Gastrocnemius medialis (tissue), 4 donors: ENCODE measurements at regions of chr4 and their contacts with region 1.

Region 1: DNA sequence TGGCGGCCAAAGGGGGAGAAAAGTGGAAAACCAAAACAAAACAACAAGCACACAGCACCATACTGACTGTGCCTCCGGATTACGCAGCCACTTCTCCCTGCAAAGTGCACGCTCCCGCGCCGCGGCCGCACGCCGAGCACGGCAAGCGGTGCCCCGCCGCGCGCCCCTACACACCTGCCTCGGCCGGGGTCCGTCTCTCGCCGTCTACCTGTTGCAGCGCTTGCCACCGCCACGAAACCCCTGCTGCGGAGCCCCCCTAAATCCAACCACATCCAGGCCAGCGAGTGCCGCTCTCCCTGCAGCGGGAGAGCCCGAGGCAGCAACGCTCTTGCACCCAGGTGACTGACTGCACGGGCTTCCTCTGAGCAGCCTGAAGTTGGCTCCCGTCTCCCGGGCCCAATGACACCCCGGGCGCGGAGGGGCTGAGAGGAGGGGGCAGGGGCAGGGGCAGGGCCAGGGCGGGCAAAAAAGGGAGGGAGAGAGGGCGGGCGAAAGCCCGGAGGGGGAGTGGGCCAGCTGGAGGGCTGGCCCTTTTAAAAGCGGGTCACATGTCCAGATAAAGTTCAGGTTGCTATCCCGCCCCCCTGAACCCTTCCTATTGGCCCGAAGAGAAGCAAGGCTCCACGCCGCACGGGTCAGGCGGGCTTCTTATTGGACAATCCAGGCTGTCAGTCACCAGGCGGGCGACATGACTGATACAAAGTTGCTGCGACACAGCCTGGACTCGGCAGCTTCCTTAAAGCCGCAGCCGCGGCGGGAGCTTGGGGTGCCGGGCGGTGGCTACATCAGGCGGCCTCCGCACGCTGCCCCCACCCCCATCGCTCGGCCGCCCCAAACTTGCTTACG is at the start of gene NR3C2:
- DNase-seq: peak; percentile 100
- ATAC-seq: peak; percentile 78 to 81
- H3K4me3 ChIP-seq: peak within 1 kb of the TSS; percentile 94 to 100 (median 97)
- H3K27ac ChIP-seq: peak within 1 kb of the TSS; percentile 97 to 98 (median 98)
- H3K4me1 ChIP-seq: peaks cover 2 to 37% of the 10 kb centered on the region in 2 donors
- H3K27me3 ChIP-seq: no peaks in the 10 kb centered on the region
- CTCF ChIP-seq: no peak
- POLR2A ChIP-seq: peak; percentile 100
- total RNA-seq, gene NR3C2: 5.6 to 10.4 (median 8.1) TPM

Region 2: DNA sequence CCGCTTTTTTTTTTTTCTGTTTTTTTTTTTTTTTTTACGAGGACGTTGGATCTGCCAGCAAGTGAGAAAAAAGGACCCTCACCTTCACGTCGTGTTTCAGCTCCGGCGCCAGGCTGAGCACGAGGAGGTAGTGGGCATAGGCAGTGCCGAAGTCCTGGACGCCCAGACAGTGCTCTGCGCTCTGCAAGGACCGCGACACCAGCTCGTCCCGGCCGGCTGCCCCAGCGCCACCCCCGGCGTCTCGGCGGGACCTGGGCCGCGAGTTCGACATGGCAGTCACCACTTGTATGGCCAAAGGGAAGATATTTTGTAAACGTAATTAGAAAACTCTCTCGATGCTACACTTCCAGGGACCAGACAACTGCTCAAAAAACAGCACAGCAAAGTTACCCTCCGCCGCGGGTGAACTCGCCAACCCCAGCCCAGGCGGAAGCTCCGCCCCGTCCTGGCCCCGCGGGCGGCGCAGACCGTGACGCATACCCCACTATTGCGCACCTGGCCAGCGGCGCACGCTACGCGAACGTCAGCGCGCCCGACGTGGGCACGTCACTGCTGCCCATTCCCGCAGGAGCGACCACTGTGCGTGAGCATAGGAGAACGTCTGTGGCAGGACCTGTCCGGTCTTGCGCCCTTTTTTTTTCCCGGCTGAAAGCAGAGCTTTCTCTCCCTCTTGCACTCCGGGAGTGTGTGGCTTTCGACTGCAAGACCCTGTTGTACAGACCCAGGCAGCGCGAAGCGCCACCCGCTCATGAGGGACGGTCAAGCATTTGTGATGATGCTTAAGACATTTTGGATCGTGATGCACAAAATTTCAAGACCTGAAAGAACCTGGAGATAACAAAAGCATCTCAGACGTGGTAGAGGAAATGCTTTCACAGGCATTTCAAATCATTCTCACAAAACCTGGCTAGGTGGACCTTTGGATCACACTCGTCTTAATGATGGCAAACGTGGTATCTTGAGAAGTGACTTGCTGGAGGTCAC is 758.2 kb before region 1 on chr4 and contains the start of gene PRMT9:
- in situ Hi-C with region 1: no loop called
- intact Hi-C with region 1: loop called (anchors 5 kb)
- DNase-seq: peak; percentile 75 to 88
- ATAC-seq: peak; percentile 94 to 95
- H3K4me3 ChIP-seq: peak within 1 kb of the TSS; percentile 67 to 93 (median 90)
- H3K27ac ChIP-seq: peak within 1 kb of the TSS; percentile 90 to 97 (median 93)
- H3K4me1 ChIP-seq: peaks cover 19 to 20% of the 10 kb centered on the region in 2 donors
- H3K27me3 ChIP-seq: no peaks in the 10 kb centered on the region
- CTCF ChIP-seq: no peak
- POLR2A ChIP-seq: peak; percentile 84 to 85
- total RNA-seq, gene PRMT9: 5.2 to 9.1 (median 5.5) TPM

Region 3: DNA sequence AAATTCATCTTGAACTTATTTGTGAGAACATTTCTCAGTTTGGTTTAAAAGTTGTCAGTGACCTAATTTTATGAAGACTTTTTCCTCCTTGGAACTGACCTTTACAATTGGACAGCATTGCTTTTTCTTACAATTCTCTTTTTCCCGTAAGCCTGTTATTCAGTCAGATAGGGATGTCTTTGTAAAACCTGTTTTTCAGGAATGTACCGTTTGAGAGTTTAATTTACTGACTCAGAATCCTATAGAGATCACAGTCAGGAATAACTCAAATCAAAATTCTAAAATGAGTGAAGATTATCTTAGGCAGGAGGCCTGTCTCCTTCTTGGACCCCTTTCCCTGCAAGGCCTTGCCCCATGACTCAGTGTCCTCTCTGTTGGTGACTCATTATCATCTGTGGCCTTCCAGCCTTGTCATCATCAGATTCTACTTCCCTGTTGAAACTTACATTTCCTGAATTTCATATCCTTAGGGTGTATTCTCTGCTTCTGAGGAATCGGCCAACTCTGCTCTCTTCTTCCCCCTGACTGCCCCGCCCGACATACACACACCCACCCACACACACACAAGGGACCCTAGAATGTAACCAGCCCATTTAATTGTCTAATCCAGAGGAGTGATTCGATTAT is 610.5 kb before region 1 on chr4:
- in situ Hi-C with region 1: no loop called
- intact Hi-C with region 1: loop called (anchors 5 kb)
- DNase-seq: peak; percentile 66 to 75
- ATAC-seq: peak; percentile 57 to 61
- H3K4me3 ChIP-seq: no peak overlapping the region
- H3K27ac ChIP-seq: peak overlapping the region; percentile 92 to 95 (median 94)
- H3K4me1 ChIP-seq: peaks cover 72 to 82% of the 10 kb centered on the region in 2 donors
- H3K27me3 ChIP-seq: no peaks in the 10 kb centered on the region
- CTCF ChIP-seq: no peak
- POLR2A ChIP-seq: peak in 1 of 2 donors; percentile 35

Region 4: GRCh38 chr4:148056869-148057268 is 385.3 kb before region 1 on chr4:
- in situ Hi-C with region 1: no loop called
- intact Hi-C with region 1: loop called (anchors 10 kb)
- DNase-seq: peak in 1 of 2 donors; percentile 74
- ATAC-seq: peak in 1 of 2 donors; percentile 42
- H3K4me3 ChIP-seq: no peak overlapping the region
- H3K27ac ChIP-seq: peak overlapping the region; percentile 64 to 84 (median 79)
- H3K4me1 ChIP-seq: peaks cover 89 to 90% of the 10 kb centered on the region in 2 donors
- H3K27me3 ChIP-seq: no peaks in the 10 kb centered on the region
- CTCF ChIP-seq: no peak
- POLR2A ChIP-seq: no peak

Region 5: GRCh38 chr4:148283665-148284064 is 158.5 kb before region 1 on chr4:
- in situ Hi-C with region 1: no loop called
- intact Hi-C with region 1: loop called (anchors 2 kb)
- DNase-seq: no peak
- ATAC-seq: peak; percentile 57 to 64
- H3K4me3 ChIP-seq: no peak overlapping the region
- H3K27ac ChIP-seq: peak overlapping the region; percentile 64 to 73 (median 70)
- H3K4me1 ChIP-seq: peaks cover 51 to 58% of the 10 kb centered on the region in 2 donors
- H3K27me3 ChIP-seq: no peaks in the 10 kb centered on the region
- CTCF ChIP-seq: no peak
- POLR2A ChIP-seq: no peak

Region 6: DNA sequence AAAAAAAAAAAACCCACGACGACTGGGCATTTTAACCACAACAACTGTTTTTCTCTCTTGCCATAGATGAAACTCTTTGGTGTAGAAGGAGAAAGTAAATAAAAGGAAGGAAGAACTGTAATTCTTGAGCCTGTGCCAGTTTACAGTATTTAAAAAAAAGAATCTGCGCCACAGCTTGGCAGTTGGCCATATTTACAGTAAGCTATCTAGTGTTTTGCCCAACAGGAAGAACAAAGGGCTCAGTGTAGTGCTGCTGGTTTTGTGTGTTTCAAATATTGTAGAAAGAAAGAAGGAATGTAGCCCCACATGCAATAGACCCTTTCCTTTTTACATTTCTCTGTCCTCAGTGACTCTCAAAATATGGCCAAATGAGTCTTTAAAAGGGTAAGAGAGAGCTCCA is 66.1 kb before region 1 on chr4:
- in situ Hi-C with region 1: no loop called
- intact Hi-C with region 1: loop called (anchors 5 kb)
- DNase-seq: peak in 1 of 2 donors; percentile 29
- ATAC-seq: peak; percentile 54 to 84
- H3K4me3 ChIP-seq: peak overlapping the region; percentile 49 to 52 (median 51)
- H3K27ac ChIP-seq: peak overlapping the region; percentile 17 to 58 (median 46)
- H3K4me1 ChIP-seq: peaks cover 9 to 15% of the 10 kb centered on the region in 2 donors
- H3K27me3 ChIP-seq: no peaks in the 10 kb centered on the region
- CTCF ChIP-seq: no peak
- POLR2A ChIP-seq: no peak